Panc1 (cell line): ENCODE measurements at regions of chr12 and their contacts with region 1.

Region 1: DNA sequence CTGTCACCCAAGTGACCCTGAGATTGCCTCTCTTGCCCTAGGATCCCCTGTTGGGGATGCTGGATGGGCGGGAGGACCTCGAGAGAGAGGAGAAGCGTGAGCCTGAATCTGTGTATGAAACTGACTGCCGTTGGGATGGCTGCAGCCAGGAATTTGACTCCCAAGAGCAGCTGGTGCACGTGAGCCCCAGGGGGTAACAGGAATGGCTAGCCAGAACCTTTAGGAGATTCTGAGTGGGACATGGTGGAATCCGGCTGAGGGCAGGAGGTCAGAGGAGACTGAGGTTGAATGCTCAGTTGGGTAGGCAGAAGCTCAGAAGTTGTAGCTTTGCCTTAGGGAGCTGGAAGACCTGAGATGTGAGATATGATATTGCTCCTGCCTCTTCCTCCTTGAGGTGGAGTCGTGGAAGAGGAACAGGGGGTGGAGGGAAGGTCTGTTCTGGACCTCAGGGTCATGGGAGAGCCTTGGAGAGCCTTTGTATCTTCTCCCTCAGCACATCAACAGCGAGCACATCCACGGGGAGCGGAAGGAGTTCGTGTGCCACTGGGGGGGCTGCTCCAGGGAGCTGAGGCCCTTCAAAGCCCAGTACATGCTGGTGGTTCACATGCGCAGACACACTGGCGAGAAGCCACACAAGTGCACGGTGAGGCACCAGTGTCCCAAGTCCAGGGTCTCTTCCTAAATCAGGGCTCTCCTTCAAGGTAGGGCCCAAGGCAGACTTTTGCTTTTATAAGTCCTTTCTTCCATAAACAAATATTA is 6.3 kb downstream of the GLI1 start:
- DNase-seq: no peak
- ATAC-seq: no peak
- H3K4me3 ChIP-seq: no peak overlapping the region
- H3K27ac ChIP-seq: no peak overlapping the region
- H3K4me1 ChIP-seq: peaks cover 1% of the 10 kb centered on the region
- H3K27me3 ChIP-seq: no peaks in the 10 kb centered on the region
- CTCF ChIP-seq: no peak

Region 2: DNA sequence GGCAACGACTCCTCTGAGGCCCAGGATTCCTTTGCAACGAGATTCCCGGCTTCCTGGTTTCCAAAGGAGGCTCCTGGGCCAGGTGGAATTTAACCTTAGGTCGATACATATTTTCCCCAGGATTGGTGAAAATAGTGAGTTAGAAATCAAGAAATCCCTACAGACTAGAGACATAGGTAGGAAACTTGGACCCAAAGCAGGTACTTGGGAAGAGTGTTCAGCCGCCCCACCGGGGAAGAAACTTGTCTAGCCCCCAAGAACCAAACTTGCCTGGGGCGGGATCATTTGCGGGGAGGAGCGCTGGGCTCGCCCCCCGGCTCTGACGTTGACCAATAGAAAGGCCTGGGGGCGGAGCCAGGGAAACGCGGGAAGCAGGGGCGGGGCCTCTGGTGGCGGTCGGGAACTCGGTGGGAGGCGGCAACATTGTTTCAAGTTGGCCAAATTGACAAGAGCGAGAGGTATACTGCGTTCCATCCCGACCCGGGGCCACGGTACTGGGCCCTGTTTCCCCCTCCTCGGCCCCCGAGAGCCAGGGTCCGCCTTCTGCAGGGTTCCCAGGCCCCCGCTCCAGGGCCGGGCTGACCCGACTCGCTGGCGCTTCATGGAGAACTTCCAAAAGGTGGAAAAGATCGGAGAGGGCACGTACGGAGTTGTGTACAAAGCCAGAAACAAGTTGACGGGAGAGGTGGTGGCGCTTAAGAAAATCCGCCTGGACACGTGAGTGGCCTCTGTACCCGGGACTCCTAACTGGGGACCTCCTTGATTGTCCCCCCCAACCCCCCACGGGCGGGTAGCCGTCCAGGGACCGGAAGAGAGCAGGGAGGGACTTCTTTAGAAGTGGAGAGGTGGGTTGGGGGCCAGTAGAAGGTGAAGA is 1499.3 kb before region 1 on chr12 and contains the start of gene CDK2:
- CTCF ChIA-PET with region 1: no interaction called
- POLR2A ChIA-PET with region 1: interaction called, 10 read pairs
- in situ Hi-C with region 1: no loop called
- intact Hi-C with region 1: no loop called
- DNase-seq: no peak
- ATAC-seq: peak; percentile 98
- H3K4me3 ChIP-seq: peak within 1 kb of the TSS; percentile 92 to 98
- H3K27ac ChIP-seq: peak within 1 kb of the TSS; percentile 93
- H3K4me1 ChIP-seq: peaks cover 15% of the 10 kb centered on the region
- H3K27me3 ChIP-seq: no peaks in the 10 kb centered on the region
- CTCF ChIP-seq: no peak
- total RNA-seq, gene CDK2: 72.9 TPM

Region 3: DNA sequence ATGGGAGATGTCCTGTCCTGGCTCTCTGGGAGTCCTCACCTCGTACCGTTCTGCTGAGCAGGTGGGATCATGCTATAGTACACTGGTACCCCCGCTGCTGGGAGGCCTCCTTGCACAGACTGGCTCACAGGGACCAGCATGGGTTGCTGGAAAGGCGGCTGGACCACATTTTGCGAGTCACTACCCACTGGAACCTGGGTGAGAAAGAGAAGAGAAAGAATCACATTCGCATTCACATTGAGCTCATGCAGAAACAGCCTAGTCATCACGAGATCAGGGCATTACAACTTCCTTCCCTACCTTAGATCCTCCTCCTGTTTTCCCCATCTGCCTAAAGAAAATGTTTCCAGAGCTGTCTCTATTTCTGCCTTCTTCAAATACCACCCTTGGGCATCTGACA is 197.7 kb before region 1 on chr12:
- CTCF ChIA-PET with region 1: no interaction called
- POLR2A ChIA-PET with region 1: no interaction called
- in situ Hi-C with region 1: no loop called
- intact Hi-C with region 1: no loop called
- DNase-seq: no peak
- ATAC-seq: no peak
- H3K4me3 ChIP-seq: no peak overlapping the region
- H3K27ac ChIP-seq: no peak overlapping the region
- H3K4me1 ChIP-seq: no peaks in the 10 kb centered on the region
- H3K27me3 ChIP-seq: no peaks in the 10 kb centered on the region
- CTCF ChIP-seq: no peak

Region 4: GRCh38 chr12:57418255-57418654 is 47.7 kb before region 1 on chr12:
- CTCF ChIA-PET with region 1: interaction called, 10 read pairs
- POLR2A ChIA-PET with region 1: no interaction called
- in situ Hi-C with region 1: no loop called
- intact Hi-C with region 1: no loop called
- DNase-seq: no peak
- ATAC-seq: no peak
- H3K4me3 ChIP-seq: no peak overlapping the region
- H3K27ac ChIP-seq: no peak overlapping the region
- H3K4me1 ChIP-seq: no peaks in the 10 kb centered on the region
- H3K27me3 ChIP-seq: no peaks in the 10 kb centered on the region
- CTCF ChIP-seq: no peak

Region 5: DNA sequence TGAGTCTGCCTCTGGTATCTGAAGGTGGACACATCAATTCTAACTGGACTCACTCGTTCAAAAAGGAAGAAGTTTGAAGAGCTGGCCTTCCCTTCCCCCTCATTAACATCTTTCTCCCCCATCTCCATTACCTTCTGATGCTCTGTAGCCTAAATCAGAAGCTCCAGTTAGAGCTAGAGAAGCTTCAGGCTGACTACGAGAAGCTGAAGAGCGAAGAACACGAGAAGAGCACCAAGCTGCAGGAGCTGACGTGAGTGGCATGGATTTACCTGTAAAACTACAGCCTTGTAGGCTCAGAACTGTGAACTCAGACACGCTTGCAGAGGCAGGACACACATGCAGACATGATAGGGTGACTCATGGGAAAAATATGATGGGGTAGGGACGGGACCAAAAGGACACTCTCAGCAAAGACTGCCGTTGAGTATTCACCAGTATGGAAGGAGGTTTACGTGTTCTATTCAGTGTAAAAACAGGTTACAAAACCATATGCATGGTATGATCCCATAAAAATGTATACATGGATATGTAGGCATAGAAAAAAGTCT is 110.8 kb after region 1 on chr12:
- CTCF ChIA-PET with region 1: no interaction called
- POLR2A ChIA-PET with region 1: no interaction called
- in situ Hi-C with region 1: no loop called
- intact Hi-C with region 1: no loop called
- DNase-seq: no peak
- ATAC-seq: no peak
- H3K4me3 ChIP-seq: no peak overlapping the region
- H3K27ac ChIP-seq: no peak overlapping the region
- H3K4me1 ChIP-seq: no peaks in the 10 kb centered on the region
- H3K27me3 ChIP-seq: no peaks in the 10 kb centered on the region
- CTCF ChIP-seq: no peak